ENCODE measurements at regions of chr5 and their contacts with region 1.

Region 1: GRCh38 chr5:56737002-56737621 is 78.2 kb upstream of the MAP3K1 start:
- DNase-seq: peak; percentile 34
- ATAC-seq: peak; percentile 18
- H3K4me3 ChIP-seq: peak overlapping the region in 1 of 5 experiments; percentile 48
- H3K4me3 Mint-ChIP-seq: peak overlapping the region; percentile 73
- H3K27ac ChIP-seq: peak overlapping the region; percentile 79 to 91
- H3K27ac Mint-ChIP-seq: peak overlapping the region; percentile 87
- H3K4me1 ChIP-seq: peaks cover 63% of the 10 kb centered on the region in 2 donors
- H3K4me1 Mint-ChIP-seq: peaks cover 63% of the 10 kb centered on the region
- H3K27me3 ChIP-seq: no peaks in the 10 kb centered on the region
- H3K27me3 Mint-ChIP-seq: no peaks in the 10 kb centered on the region
- CTCF ChIP-seq: no peak

Region 2: DNA sequence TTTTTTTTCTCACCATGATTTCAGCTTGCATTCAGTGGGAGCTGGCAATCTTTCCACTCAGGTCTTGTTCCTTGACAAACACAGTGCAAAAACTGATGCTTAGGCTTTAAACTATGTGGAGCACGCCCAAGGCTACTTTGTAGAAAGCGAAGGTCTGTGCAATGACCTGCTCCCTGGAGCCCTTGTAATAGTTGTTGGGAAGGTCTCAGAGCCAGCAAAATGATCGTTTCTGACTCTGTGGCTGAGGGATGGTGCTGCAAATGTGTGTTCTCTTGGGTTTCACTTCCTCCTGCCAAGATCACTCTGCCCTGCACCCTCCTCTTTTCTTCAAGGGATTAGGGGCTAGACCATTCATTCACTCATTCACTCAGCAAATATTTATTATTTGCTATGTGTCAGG is 171.5 kb before region 1 on chr5:
- CTCF ChIA-PET with region 1: no interaction called
- POLR2A ChIA-PET with region 1: no interaction called
- intact Hi-C with region 1: loop called (anchors 5 kb)
- DNase-seq: peak; percentile 82
- ATAC-seq: peak; percentile 97
- H3K4me3 ChIP-seq: peak overlapping the region in 3 of 5 experiments; percentile 6 to 20 (median 9)
- H3K4me3 Mint-ChIP-seq: peak overlapping the region; percentile 56
- H3K27ac ChIP-seq: no peak overlapping the region
- H3K27ac Mint-ChIP-seq: peak overlapping the region; percentile 69
- H3K4me1 ChIP-seq: peaks cover 34 to 35% of the 10 kb centered on the region in 2 donors
- H3K4me1 Mint-ChIP-seq: peaks cover 41% of the 10 kb centered on the region
- H3K27me3 ChIP-seq: no peaks in the 10 kb centered on the region
- H3K27me3 Mint-ChIP-seq: no peaks in the 10 kb centered on the region
- CTCF ChIP-seq: no peak

Region 3: DNA sequence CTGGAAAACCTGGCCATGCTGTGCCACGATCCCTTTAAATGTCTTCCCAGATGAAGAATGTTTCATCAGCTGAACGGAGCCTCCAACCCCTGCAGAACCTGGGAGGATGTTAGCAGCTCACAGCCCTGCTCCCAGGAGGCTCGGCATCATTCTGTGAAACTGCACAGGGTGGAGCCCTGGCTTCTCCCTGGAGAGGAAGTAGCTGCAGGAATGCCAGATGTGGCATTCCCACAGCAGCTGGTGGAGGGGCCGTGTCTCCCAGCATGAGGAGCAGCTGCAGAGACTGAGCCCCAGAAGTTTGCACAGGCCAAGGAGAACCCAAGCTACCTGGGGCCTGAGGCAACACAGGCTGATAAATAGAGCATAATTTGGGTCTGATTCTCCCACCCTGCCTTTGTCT is 87.5 kb before region 1 on chr5:
- CTCF ChIA-PET with region 1: no interaction called
- POLR2A ChIA-PET with region 1: no interaction called
- intact Hi-C with region 1: no loop called
- DNase-seq: no peak
- ATAC-seq: no peak
- H3K4me3 ChIP-seq: no peak overlapping the region
- H3K4me3 Mint-ChIP-seq: no peak overlapping the region
- H3K27ac ChIP-seq: no peak overlapping the region
- H3K27ac Mint-ChIP-seq: no peak overlapping the region
- H3K4me1 ChIP-seq: peaks cover 0 to 3% of the 10 kb centered on the region in 2 donors
- H3K4me1 Mint-ChIP-seq: peaks cover 24% of the 10 kb centered on the region
- H3K27me3 ChIP-seq: no peaks in the 10 kb centered on the region
- H3K27me3 Mint-ChIP-seq: no peaks in the 10 kb centered on the region
- CTCF ChIP-seq: no peak

Region 4: DNA sequence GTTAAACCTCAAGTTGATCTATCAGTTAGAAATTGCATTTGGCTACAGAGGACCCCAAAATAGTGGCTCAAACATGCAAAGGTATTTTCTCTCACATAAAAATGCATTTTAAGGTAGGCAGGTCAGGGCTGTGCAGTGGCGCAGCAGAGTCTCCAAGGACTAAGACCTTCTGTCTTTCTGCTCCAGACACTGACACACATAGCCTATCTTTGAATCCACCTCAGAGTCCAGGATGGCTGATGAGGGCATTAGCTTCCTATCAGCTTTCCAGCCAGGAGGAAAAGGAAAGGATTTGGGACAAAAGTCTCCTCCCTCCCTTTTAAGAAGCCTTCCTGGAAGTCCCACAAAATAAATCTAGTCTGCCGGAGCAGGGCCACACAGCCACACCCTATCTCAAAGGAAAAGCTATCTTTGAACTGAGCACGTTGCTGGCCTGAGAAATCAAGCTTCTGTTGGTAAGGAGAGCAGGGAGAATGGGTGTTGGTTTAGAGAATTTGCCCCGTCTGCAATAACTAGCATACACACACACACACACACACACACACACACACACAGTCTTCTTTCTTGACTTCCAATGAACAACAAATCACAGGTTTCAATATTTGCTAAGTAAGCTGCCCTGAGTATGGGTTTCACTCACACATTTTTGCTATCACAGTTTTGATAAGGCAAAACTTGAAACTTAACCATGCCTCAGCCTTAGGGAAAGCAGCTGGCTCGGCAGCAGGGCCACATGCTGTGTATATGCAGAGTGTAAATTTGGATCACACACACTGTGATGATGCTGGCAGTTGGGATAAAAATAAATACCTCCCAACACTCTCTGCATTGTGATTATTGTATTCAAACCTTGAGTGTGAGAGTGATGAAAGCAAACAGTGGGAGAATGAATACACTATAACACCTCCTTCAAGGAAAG is 38.4 kb before region 1 on chr5:
- CTCF ChIA-PET with region 1: interaction called, 6 read pairs
- POLR2A ChIA-PET with region 1: no interaction called
- intact Hi-C with region 1: loop called (anchors 5 kb)
- DNase-seq: no peak
- ATAC-seq: no peak
- H3K4me3 ChIP-seq: no peak overlapping the region
- H3K4me3 Mint-ChIP-seq: no peak overlapping the region
- H3K27ac ChIP-seq: no peak overlapping the region
- H3K27ac Mint-ChIP-seq: no peak overlapping the region
- H3K4me1 ChIP-seq: peaks cover 36 to 37% of the 10 kb centered on the region in 2 donors
- H3K4me1 Mint-ChIP-seq: peaks cover 52% of the 10 kb centered on the region
- H3K27me3 ChIP-seq: no peaks in the 10 kb centered on the region
- H3K27me3 Mint-ChIP-seq: no peaks in the 10 kb centered on the region
- CTCF ChIP-seq: no peak

Region 5: GRCh38 chr5:56763711-56764466 is 26.8 kb after region 1 on chr5:
- CTCF ChIA-PET with region 1: no interaction called
- POLR2A ChIA-PET with region 1: no interaction called
- intact Hi-C with region 1: loop called (anchors 1 kb)
- DNase-seq: peak; percentile 66
- ATAC-seq: peak; percentile 87
- H3K4me3 ChIP-seq: peak overlapping the region in 1 of 5 experiments; percentile 0
- H3K4me3 Mint-ChIP-seq: peak overlapping the region; percentile 52
- H3K27ac ChIP-seq: peak overlapping the region; percentile 56 to 60
- H3K27ac Mint-ChIP-seq: peak overlapping the region; percentile 61
- H3K4me1 ChIP-seq: peaks cover 63 to 69% of the 10 kb centered on the region in 2 donors
- H3K4me1 Mint-ChIP-seq: peaks cover 70% of the 10 kb centered on the region
- H3K27me3 ChIP-seq: no peaks in the 10 kb centered on the region
- H3K27me3 Mint-ChIP-seq: no peaks in the 10 kb centered on the region
- CTCF ChIP-seq: no peak

Measured in B cell (primary cell).